Naive thymus-derived CD4-positive, alpha-beta T cell (primary cell): ENCODE measurements at regions of chr10 and their contacts with region 1.

Region 1: GRCh38 chr10:1380088-1380651 is 324.0 kb downstream of the WDR37 start:
- DNase-seq: no peak
- ATAC-seq: no peak
- H3K4me3 ChIP-seq: no peak overlapping the region
- H3K4me3 Mint-ChIP-seq: no peak overlapping the region
- H3K27ac ChIP-seq: no peak overlapping the region
- H3K27ac Mint-ChIP-seq: no peak overlapping the region
- H3K4me1 ChIP-seq: no peaks in the 10 kb centered on the region
- H3K4me1 Mint-ChIP-seq: peaks cover 0 to 1% (median 0%) of the 10 kb centered on the region in 7 donors
- H3K27me3 ChIP-seq: peaks cover 0 to 2% of the 10 kb centered on the region in 2 donors
- H3K27me3 Mint-ChIP-seq: peaks cover 37 to 78% (median 65%) of the 10 kb centered on the region in 5 donors

Region 2: GRCh38 chr10:1287971-1288401 is 92.2 kb before region 1 on chr10:
- CTCF ChIA-PET with region 1: no interaction called
- POLR2A ChIA-PET with region 1: no interaction called
- intact Hi-C with region 1: loop called in 1 of 2 experiments (anchors 10 kb)
- DNase-seq: no peak
- ATAC-seq: peak; percentile 29
- H3K4me3 ChIP-seq: no peak overlapping the region
- H3K4me3 Mint-ChIP-seq: peak overlapping the region in 4 of 10 donors; percentile 44 to 70 (median 68)
- H3K27ac ChIP-seq: no peak overlapping the region
- H3K27ac Mint-ChIP-seq: peak overlapping the region in 4 of 9 donors; percentile 20 to 79 (median 55)
- H3K4me1 ChIP-seq: peaks cover 0 to 6% of the 10 kb centered on the region in 2 donors
- H3K4me1 Mint-ChIP-seq: peaks cover 0 to 17% (median 4%) of the 10 kb centered on the region in 7 donors
- H3K27me3 ChIP-seq: no peaks in the 10 kb centered on the region
- H3K27me3 Mint-ChIP-seq: peaks cover 0 to 12% (median 5%) of the 10 kb centered on the region in 5 donors

Region 3: GRCh38 chr10:1399431-1400100 is 19.4 kb after region 1 on chr10:
- CTCF ChIA-PET with region 1: no interaction called
- POLR2A ChIA-PET with region 1: no interaction called
- intact Hi-C with region 1: no loop called
- DNase-seq: peak in 1 of 9 donors; percentile 4
- ATAC-seq: no peak
- H3K4me3 ChIP-seq: no peak overlapping the region
- H3K4me3 Mint-ChIP-seq: no peak overlapping the region
- H3K27ac ChIP-seq: no peak overlapping the region
- H3K27ac Mint-ChIP-seq: no peak overlapping the region
- H3K4me1 ChIP-seq: no peaks in the 10 kb centered on the region
- H3K4me1 Mint-ChIP-seq: no peaks in the 10 kb centered on the region
- H3K27me3 ChIP-seq: no peaks in the 10 kb centered on the region
- H3K27me3 Mint-ChIP-seq: peaks cover 0 to 29% (median 0%) of the 10 kb centered on the region in 5 donors